ENCODE measurements at regions of chr2 and their contacts with region 1.

Region 1: DNA sequence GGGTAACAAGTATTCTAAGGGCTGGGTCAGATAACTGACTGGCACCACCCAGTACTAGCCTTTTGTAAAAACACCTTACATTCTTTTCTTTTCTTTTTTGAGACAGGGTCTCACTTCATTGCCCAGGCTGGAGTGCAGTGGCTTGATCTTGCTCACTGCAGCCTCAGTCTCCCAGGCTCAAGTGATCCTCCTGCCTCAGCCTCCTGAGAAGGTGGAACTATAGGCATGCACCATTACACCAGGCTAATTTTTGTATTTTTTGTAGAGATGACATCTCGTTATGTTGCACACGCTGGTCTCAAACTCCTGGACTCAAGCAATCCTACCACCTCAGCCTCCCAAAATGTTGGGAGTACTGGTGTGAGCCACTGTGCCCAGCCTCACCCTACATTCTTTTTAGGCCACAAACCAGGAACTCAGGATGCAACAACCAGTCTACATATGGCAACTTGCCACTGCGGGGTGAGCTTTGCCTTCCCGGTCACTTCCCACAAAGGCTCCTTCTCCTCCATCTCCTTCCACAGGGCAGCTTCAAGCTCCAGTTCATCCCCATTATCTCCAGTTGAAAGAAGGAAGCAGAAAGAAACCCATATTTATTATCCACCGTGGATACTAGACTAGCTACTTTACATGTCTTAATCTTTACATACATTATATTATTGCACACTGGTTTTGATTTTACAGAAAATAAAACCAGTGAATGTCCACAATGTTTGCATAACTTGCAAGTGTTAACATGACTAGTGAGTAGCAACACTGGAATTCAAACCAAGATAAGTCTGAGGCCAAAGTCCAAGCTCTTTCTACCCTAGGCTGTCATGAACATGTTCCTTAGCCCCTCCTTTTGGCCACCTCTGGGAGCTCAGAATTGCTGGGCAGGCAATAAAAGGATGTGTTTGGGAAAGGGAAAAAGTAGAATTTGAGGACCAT is 23.7 kb upstream of the AP1S3 start:
- DNase-seq: no peak
- CTCF ChIP-seq: no peak

Region 2: GRCh38 chr2:223626716-223627115 is 234.4 kb before region 1 on chr2:
- CTCF ChIA-PET with region 1: no interaction called
- POLR2A ChIA-PET with region 1: no interaction called
- DNase-seq: no peak
- CTCF ChIP-seq: no peak

Region 3: DNA sequence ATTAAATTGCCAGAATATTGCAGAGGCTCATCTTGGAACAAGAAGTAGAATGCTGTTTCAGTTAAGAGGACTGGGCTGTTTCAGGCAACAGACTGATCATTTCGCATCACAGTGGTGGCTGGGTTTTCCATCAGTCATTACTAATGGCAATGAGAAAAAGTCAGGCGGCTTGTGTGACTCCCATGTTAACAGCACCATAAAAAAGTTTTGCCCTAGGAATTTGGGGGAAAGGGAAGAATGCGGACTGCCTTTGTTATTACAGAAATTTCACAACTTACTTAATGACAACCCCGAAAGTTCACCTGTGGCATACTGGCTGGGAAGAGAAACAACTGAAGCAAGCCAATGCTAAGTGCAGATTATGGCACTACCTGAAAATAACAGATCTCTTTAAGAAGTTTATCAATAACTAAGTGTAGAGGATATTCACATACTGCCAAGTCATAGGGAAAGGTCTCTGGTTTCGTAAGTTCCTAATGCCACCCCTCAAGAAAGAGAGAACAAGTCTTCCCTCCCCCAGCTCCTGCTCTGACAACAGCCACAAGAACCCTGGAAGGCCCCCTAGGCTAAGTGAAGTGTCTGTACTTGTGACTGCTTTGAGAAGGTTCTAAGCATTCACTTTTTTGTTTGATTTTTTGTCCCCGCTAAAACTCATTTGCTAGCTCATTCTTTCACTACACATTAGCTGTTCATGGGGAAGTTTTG is 16.8 kb after region 1 on chr2:
- CTCF ChIA-PET with region 1: interaction called, 17 read pairs
- POLR2A ChIA-PET with region 1: no interaction called
- DNase-seq: no peak
- CTCF ChIP-seq: no peak

Measured in GM10248 (cell line).